ENCODE measurements at regions of chr10 and their contacts with region 1.

Region 1: GRCh38 chr10:63355682-63356081 is 110.1 kb downstream of the JMJD1C start:
- DNase-seq: no peak
- H3K4me3 Mint-ChIP-seq: no peak overlapping the region
- H3K27ac Mint-ChIP-seq: peak overlapping the region; percentile 63
- H3K4me1 Mint-ChIP-seq: peaks cover 14% of the 10 kb centered on the region
- H3K27me3 Mint-ChIP-seq: no peaks in the 10 kb centered on the region

Region 2: GRCh38 chr10:63388421-63389031 is 32.8 kb after region 1 on chr10:
- intact Hi-C with region 1: loop called (anchors 1 kb)
- DNase-seq: no peak
- H3K4me3 Mint-ChIP-seq: peak overlapping the region; percentile 74
- H3K27ac Mint-ChIP-seq: peak overlapping the region; percentile 58
- H3K4me1 Mint-ChIP-seq: peaks cover 53% of the 10 kb centered on the region
- H3K27me3 Mint-ChIP-seq: no peaks in the 10 kb centered on the region

Region 3: DNA sequence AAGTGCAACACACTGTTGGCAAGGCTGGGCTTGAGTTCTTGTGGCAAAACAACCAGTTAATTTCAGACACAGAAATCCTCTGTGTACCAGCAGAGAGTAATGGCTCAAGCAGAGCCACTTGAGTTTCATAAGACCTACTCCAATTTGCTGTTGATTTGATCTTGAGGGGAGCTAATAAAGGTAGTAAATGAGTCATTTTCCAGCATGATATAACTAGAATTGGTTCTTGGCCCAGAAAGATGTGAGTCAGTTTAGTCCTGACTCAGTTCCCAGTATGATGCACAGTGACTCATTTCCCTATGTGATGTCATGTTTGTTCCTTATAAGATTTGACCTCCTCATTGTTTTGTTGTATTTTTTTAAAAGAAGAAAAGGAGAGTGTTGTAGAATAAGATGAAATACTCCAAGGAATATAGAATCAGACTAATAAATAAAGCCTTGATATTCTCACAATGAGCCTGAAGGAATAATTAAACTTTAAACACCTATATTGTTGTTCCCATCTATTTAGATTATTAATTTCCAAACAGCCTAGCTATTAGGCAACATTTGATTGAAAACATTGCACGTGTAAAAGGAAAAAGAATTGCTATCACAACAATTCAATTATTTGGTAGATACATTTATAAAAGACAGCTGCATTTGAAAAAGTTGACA is 351.7 kb after region 1 on chr10:
- intact Hi-C with region 1: loop called (anchors 10 kb)
- DNase-seq: peak; percentile 63
- H3K4me3 Mint-ChIP-seq: peak overlapping the region; percentile 32
- H3K27ac Mint-ChIP-seq: peak overlapping the region; percentile 63
- H3K4me1 Mint-ChIP-seq: peaks cover 15% of the 10 kb centered on the region
- H3K27me3 Mint-ChIP-seq: no peaks in the 10 kb centered on the region

Region 4: DNA sequence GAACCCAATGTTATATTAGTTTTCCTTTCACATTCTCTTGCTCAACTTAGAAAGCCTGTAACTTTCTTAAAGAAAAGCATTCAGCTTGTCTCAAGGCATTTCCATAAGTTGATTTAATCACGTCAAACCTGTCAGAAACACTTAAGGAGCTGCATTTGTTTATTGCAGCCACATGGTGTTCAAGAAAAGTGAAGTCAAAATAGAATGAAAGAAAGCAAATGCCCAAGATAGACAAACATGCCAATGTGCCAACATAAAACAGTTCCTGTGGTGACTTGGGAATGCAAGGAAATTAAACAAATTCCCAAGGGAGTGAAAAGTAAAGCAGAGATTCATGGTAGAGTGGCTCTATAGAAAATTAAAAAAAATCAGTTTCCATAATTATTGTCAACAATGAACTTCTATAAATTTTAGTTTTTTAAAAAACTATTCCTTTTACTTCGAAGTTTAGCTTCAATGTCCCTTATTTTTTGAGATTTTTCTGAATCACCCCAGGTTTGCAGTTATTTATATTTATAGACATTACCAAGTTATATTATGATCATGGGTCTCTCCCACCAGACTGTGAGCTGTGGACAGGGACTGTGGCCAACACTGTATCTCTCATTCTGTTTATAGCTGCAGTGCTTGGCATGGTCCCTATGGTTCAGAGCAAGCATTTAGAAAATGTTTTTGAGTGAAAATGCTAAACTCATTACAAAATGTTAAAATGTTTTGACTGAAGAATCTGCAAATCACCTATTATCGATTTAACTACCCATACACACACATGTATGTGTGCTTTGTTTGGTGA is 1052.9 kb after region 1 on chr10:
- intact Hi-C with region 1: no loop called
- DNase-seq: no peak
- H3K4me3 Mint-ChIP-seq: no peak overlapping the region
- H3K27ac Mint-ChIP-seq: no peak overlapping the region
- H3K4me1 Mint-ChIP-seq: no peaks in the 10 kb centered on the region
- H3K27me3 Mint-ChIP-seq: no peaks in the 10 kb centered on the region

Measured in activated CD4-positive, alpha-beta T cell treated with anti-CD3 and anti-CD28 coated beads, Interleukin-2, amount 10 ng/mL, durations not matched to agents 24 days and 14 days (primary cell).